ENCODE measurements at regions of chr11 and their contacts with region 1.

Region 1: GRCh38 chr11:47800759-47801158 is 33.6 kb upstream of the FNBP4 start:
- DNase-seq: no peak
- ATAC-seq: no peak
- H3K4me3 ChIP-seq: no peak overlapping the region
- H3K27ac ChIP-seq: no peak overlapping the region
- H3K4me1 ChIP-seq: no peaks in the 10 kb centered on the region
- H3K27me3 ChIP-seq: no peaks in the 10 kb centered on the region
- CTCF ChIP-seq: no peak
- POLR2A ChIP-seq: no peak
- RAD21 ChIP-seq: no peak

Region 2: GRCh38 chr11:47731475-47731874 is 69.3 kb before region 1 on chr11:
- CTCF ChIA-PET with region 1: no interaction called
- POLR2A ChIA-PET with region 1: no interaction called
- dilution Hi-C with region 1: no loop called
- in situ Hi-C with region 1: no loop called
- intact Hi-C with region 1: loop called (anchors 10 kb)
- DNase-seq: no peak
- ATAC-seq: peak; percentile 28
- H3K4me3 ChIP-seq: no peak overlapping the region
- H3K27ac ChIP-seq: no peak overlapping the region
- H3K4me1 ChIP-seq: peaks cover 2% of the 10 kb centered on the region; the same call in 1 of the 2 replicates
- H3K27me3 ChIP-seq: no peaks in the 10 kb centered on the region
- CTCF ChIP-seq: no peak
- POLR2A ChIP-seq: no peak
- RAD21 ChIP-seq: no peak

Region 3: GRCh38 chr11:47858169-47858543 is 57.4 kb after region 1 on chr11:
- CTCF ChIA-PET with region 1: no interaction called
- POLR2A ChIA-PET with region 1: no interaction called
- dilution Hi-C with region 1: no loop called
- in situ Hi-C with region 1: no loop called
- intact Hi-C with region 1: no loop called
- DNase-seq: peak; percentile 72
- ATAC-seq: peak; percentile 56; the same call in 1 of the 2 replicates
- H3K4me3 ChIP-seq: no peak overlapping the region
- H3K27ac ChIP-seq: no peak overlapping the region
- H3K4me1 ChIP-seq: peaks cover 2% of the 10 kb centered on the region; the same call in 1 of the 2 replicates
- H3K27me3 ChIP-seq: no peaks in the 10 kb centered on the region
- CTCF ChIP-seq: no peak
- POLR2A ChIP-seq: no peak
- RAD21 ChIP-seq: no peak